Activated CD4-positive, alpha-beta memory T cell treated with anti-CD3 and anti-CD28 coated beads for 36 hours (primary cell): ENCODE measurements at regions of chr10 and their contacts with region 1.

Region 1: GRCh38 chr10:103712570-103713498 is 142.5 kb downstream of the SH3PXD2A start:
- DNase-seq: peak; percentile 89
- H3K4me3 Mint-ChIP-seq: no peak overlapping the region
- H3K27ac Mint-ChIP-seq: peak overlapping the region; percentile 4
- H3K4me1 Mint-ChIP-seq: peaks cover 2% of the 10 kb centered on the region
- H3K27me3 Mint-ChIP-seq: no peaks in the 10 kb centered on the region

Region 2: DNA sequence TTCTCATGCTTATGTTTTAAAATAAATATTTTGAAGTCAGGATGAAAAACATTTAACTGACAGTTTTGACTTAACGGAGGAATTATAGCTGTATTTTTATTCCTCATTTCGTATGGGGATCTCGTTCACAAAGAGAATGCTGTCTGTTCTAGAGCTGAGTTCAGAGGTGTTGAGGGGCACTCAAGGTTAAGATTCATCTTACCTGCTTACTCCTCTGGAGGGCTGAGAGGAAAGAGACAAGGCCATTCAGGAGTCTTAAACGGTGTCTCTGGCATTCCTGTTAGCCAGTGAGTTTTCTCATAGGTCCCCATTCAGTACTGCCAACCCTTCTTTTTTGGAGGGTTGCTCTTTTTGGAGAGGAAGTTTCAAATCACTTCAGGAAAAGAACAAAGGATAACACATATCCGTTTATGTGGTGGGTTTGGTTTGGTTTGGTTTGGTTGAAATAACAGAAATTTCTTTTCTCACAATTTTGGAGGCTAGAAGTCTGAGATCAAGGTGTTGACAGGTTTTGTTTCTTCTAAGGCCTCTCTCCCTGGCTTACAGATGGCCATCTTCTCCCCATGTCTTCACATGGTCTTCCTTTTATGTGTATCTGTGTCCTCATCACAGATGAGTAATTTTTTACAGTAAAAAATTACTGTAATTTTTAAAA is 283.7 kb before region 1 on chr10:
- CTCF ChIA-PET with region 1: no interaction called
- POLR2A ChIA-PET with region 1: no interaction called
- intact Hi-C with region 1: no loop called
- DNase-seq: no peak
- H3K4me3 Mint-ChIP-seq: no peak overlapping the region
- H3K27ac Mint-ChIP-seq: peak overlapping the region; percentile 48
- H3K4me1 Mint-ChIP-seq: peaks cover 34% of the 10 kb centered on the region
- H3K27me3 Mint-ChIP-seq: no peaks in the 10 kb centered on the region

Region 3: GRCh38 chr10:103696411-103697145 is 16.3 kb before region 1 on chr10:
- CTCF ChIA-PET with region 1: interaction called, 24 read pairs
- POLR2A ChIA-PET with region 1: no interaction called
- intact Hi-C with region 1: no loop called
- DNase-seq: peak; percentile 92
- H3K4me3 Mint-ChIP-seq: peak overlapping the region; percentile 48
- H3K27ac Mint-ChIP-seq: peak overlapping the region; percentile 77
- H3K4me1 Mint-ChIP-seq: peaks cover 30% of the 10 kb centered on the region
- H3K27me3 Mint-ChIP-seq: no peaks in the 10 kb centered on the region

Region 4: GRCh38 chr10:103781329-103782061 is 68.7 kb after region 1 on chr10:
- CTCF ChIA-PET with region 1: interaction called, 17 read pairs
- POLR2A ChIA-PET with region 1: no interaction called
- intact Hi-C with region 1: no loop called
- DNase-seq: peak; percentile 36
- H3K4me3 Mint-ChIP-seq: no peak overlapping the region
- H3K27ac Mint-ChIP-seq: no peak overlapping the region
- H3K4me1 Mint-ChIP-seq: peaks cover 16% of the 10 kb centered on the region
- H3K27me3 Mint-ChIP-seq: peaks cover 5% of the 10 kb centered on the region

Region 5: DNA sequence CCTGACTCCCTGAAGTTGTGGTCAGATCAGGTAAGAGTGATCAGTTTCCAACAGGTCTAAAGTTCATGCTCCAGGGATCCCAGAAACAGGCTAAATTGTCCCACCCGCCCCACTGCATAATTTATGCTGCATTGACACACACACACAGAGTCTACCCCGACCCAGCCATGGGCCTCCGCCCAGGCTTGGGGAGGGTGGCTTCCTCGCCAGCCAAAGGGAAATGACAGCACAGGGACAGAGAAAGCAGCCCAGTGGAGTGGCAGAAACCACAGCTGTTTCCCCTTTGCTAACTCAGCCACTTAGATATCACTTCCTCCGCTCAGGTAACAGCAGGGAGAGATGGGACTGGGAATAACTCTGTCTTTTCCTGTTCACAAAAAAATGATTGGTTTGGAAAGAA is 133.1 kb after region 1 on chr10:
- CTCF ChIA-PET with region 1: interaction called, 161 read pairs
- POLR2A ChIA-PET with region 1: no interaction called
- intact Hi-C with region 1: no loop called
- DNase-seq: peak; percentile 65
- H3K4me3 Mint-ChIP-seq: no peak overlapping the region
- H3K27ac Mint-ChIP-seq: peak overlapping the region; percentile 31
- H3K4me1 Mint-ChIP-seq: peaks cover 22% of the 10 kb centered on the region
- H3K27me3 Mint-ChIP-seq: no peaks in the 10 kb centered on the region

Region 6: DNA sequence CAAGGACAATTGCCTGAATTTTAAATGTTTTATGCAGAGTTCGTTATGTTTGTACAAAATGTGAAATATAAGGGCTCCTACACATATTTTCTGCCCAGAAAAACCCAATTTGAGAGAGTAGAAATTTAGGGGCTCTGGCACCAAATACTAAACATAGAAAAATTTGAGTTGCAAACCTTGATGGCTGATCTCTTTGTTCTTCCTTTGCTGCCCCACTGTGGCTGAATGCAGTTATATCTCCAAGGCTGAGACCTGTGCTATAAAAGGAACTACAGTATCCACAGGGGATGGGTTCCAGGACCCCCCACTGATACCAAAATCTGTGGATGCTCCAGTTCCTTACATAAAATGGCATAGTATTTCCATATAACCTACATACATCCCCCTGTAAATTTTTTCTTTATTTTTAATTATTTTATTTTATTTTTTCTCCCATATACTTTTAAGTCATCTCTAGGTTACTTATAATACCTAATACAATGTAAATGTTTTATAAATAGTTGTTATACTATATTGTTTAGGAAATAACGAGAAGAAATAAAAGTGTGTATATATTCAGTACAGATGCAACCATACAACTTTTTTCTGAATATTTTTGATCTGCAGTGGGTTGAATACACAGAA is 496.9 kb after region 1 on chr10:
- CTCF ChIA-PET with region 1: interaction called, 3 read pairs
- POLR2A ChIA-PET with region 1: no interaction called
- intact Hi-C with region 1: loop called (anchors 2 kb)
- DNase-seq: peak; percentile 44
- H3K4me3 Mint-ChIP-seq: no peak overlapping the region
- H3K27ac Mint-ChIP-seq: no peak overlapping the region
- H3K4me1 Mint-ChIP-seq: no peaks in the 10 kb centered on the region
- H3K27me3 Mint-ChIP-seq: peaks cover 12% of the 10 kb centered on the region